Cardiac septum (tissue), 1 donor: ENCODE measurements at regions of chr6 and their contacts with region 1.

Region 1: GRCh38 chr6:75208298-75209183 is 2.7 kb upstream of the COL12A1 start:
- DNase-seq: peak; percentile 91

Region 2: DNA sequence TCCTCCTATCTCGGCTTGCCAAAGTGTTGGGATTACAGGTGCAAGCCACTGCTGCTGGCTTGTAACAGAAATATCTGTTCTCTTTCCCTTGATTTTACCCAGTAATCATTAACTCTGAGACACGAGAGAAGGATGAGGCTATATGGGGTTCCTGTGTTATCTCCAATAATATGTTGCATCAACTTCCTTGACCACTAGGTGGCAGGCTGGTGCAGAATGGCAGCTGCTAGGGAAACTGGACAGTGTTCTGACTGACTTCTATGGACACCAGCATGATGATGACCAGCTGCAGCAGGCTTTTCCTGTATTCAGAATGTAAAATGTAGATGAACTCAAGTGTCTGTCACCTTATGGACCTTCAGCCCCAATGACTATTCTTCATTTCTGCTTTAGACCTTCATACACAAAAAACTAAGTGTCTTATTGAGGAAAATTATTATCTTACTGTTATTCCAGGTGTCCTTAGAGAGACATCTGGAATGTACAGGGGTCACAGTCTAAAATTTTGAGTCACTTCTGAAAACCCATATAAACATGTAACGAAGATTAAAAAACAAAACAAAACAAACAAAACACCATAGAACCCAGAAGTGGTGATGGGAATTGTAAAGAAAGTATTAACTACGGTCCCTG is 1533.0 kb before region 1 on chr6:
- intact Hi-C with region 1: loop called (anchors 5 kb)
- DNase-seq: peak; percentile 88

Region 3: DNA sequence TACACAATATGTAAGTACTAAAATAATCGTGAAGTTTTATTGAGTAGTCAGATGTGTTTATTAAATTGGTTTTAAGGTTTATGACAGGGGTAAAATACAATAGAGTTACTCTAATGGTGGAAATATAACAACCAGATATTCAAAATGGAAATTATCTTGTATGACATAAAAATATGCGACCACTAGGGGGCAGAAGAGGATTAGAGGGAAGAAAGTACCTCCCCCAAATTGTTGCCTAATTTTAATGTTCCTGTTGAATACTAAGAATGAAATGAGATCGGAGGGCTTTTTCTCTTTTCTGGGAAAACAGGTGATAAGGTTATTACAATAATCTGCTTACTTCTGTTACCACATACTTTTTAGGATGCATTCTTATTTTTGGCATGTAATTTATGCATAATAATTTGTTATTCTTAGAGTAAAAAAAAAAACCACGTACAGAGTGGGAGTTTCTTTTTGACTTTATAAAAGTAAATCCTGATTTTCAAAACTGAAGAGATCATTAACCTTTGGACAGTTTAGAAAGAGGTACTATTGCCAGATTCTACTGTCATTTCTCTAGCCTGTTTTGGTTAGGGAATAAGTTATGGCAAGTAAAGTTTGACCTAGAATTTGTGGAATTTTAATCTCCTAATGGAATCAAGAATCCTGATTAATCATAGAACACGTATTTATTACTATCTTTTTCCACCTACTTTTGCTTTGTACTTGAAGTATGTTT is 1353.4 kb before region 1 on chr6:
- intact Hi-C with region 1: loop called (anchors 5 kb)
- DNase-seq: no peak

Region 4: DNA sequence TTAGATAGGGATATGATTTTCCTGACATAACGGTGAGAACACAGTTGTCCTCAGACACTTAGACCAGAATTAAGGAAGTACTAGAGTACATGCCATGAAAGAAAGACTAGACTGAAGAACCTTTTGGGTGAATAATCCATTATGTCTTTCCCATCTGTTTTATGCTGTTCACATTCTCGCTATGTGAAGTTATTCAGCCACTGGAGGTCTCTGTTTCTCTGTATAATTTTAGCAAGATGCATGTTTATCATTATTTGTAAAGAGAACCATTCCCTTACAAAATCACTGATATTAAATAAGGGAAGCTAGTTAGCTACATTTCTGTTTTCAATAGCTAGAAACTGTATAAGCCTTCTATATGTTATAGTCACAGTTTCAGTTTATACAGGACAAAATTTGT is 1120.6 kb before region 1 on chr6:
- intact Hi-C with region 1: loop called (anchors 5 kb)
- DNase-seq: no peak

Region 5: DNA sequence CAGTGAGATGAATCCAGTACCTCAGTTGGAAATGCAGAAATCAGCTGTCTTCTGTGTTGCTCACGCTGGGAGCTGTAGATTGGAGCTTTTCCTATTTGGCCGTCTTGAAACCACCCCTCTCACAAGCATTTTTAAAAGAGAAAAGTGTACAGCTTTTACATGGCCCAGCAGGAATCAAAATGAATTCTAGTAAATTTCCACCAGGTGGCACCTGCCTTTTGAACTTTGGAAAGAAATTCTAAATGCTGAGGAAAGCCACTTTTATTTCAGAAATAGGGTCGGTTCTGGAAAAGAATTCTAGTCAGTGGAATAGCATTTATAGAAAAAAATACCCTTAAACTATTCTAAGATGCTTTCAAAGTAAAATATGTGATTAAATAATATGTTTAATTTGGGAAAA is 864.7 kb before region 1 on chr6:
- intact Hi-C with region 1: loop called (anchors 10 kb)
- DNase-seq: no peak

Region 6: GRCh38 chr6:74735304-74735703 is 473.2 kb before region 1 on chr6:
- intact Hi-C with region 1: loop called (anchors 10 kb)
- DNase-seq: no peak

Region 7: GRCh38 chr6:74826263-74826662 is 382.3 kb before region 1 on chr6:
- intact Hi-C with region 1: loop called (anchors 10 kb)
- DNase-seq: no peak